BJ (cell line): ENCODE measurements at regions of chr2 and their contacts with region 1.

Region 1: DNA sequence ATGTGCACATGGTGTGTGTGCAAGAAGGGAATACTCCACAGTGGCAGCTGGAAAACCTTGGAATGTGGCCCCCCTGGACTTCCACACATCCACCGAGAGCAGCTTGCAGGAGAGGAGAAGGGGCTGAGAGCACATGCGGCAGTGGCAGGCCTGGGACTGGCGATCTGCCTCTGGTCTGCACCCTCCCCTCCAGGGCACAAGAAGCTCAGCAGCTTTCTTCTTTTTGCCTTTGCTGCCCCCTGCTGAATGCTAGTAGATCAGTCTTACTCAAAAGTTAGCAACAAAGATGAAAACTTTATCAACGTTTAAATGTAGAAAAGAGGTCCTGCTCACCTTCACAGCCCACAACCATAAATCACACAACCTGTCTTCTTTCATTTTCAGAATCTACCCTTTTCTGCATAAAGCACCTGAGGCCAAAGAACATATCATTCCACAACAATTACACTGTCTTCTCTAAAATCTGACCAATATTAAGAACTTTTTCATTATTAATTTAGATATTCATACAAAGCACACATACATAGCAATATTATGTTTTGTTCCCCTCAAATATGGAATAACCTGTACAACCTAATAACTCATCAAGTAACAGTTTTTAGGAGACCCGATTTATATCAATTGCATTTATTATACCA is 34.6 kb downstream of the TGFBRAP1 start:
- DNase-seq: peak; percentile 17
- H3K4me3 ChIP-seq: no peak overlapping the region
- H3K27me3 ChIP-seq: no peaks in the 10 kb centered on the region
- CTCF ChIP-seq: peak; percentile 70

Region 2: GRCh38 chr2:105235388-105236054 is 59.4 kb before region 1 on chr2:
- CTCF ChIA-PET with region 1: interaction called, 13 read pairs
- POLR2A ChIA-PET with region 1: no interaction called
- DNase-seq: peak; percentile 10
- H3K4me3 ChIP-seq: no peak overlapping the region
- H3K27me3 ChIP-seq: no peaks in the 10 kb centered on the region; the same call in 1 of the 2 replicates
- CTCF ChIP-seq: peak; percentile 78

Region 3: DNA sequence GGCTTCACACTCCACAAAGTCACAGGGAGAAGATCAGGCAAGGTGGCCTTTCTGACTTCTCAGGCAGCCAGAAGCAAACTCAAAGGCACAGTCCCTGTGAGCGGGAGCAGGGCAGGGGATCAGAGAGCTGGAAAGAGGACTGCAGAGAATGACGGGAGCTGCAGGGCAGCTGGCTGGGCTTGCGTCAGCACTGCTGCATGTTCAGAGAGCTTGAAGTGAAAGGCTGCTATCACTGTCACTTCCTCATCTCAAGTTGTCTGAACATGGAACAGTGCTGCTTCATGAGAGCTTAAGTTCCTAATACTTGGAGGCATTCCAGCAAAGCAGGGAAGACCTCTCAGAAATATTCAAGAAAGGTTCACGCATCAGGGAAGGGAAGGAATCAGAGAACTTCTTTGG is 14.2 kb after region 1 on chr2:
- CTCF ChIA-PET with region 1: interaction called, 16 read pairs
- POLR2A ChIA-PET with region 1: no interaction called
- DNase-seq: no peak
- H3K4me3 ChIP-seq: no peak overlapping the region
- H3K27me3 ChIP-seq: no peaks in the 10 kb centered on the region
- CTCF ChIP-seq: no peak

Region 4: DNA sequence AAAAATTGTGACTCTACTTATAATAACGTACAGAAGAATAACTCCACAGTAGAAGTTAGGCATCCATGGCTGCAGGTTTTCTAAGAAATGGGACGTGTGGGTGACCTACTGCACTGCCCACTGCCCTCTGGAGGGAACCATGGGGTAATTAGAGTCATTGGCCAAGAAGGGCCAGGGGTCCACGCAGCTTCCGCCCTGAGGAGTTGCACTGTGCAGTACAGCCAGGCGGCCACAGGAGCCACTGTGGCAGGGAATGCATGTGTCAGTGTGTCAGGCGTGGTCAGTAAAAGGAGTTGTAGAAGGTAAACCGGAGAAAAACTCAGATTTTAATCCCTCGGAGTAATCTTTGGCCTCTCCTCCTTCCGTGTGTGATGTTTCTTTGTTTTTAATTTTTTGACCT is 474.5 kb after region 1 on chr2:
- CTCF ChIA-PET with region 1: no interaction called
- POLR2A ChIA-PET with region 1: no interaction called
- DNase-seq: no peak
- H3K4me3 ChIP-seq: no peak overlapping the region
- H3K27me3 ChIP-seq: no peaks in the 10 kb centered on the region
- CTCF ChIP-seq: no peak